Activated T-helper 1 cell treated with anti-CD3 and anti-CD28 coated beads, Interleukin-12 subunit alpha, Interleukin-12 subunit beta, Interleukin-2, Interleukin-4 antibody, amounts not matched to agents 30 ng/mL and 10 ng/mL and 1 ng/mL, durations not matched to agents 14 hours and 24 hours and 36 hours (primary cell): ENCODE measurements at regions of chr4 and their contacts with region 1.

Region 1: GRCh38 chr4:165207431-165208220 is at the start of gene KLHL2:
- DNase-seq: peak; percentile 72
- H3K4me3 Mint-ChIP-seq: peak within 1 kb of the TSS; percentile 94
- H3K27ac Mint-ChIP-seq: peak within 1 kb of the TSS; percentile 88
- H3K4me1 Mint-ChIP-seq: peaks cover 74% of the 10 kb centered on the region
- H3K27me3 Mint-ChIP-seq: no peaks in the 10 kb centered on the region
- total RNA-seq, gene KLHL2: 38.6 and 40.6 TPM in 2 replicates

Region 2: DNA sequence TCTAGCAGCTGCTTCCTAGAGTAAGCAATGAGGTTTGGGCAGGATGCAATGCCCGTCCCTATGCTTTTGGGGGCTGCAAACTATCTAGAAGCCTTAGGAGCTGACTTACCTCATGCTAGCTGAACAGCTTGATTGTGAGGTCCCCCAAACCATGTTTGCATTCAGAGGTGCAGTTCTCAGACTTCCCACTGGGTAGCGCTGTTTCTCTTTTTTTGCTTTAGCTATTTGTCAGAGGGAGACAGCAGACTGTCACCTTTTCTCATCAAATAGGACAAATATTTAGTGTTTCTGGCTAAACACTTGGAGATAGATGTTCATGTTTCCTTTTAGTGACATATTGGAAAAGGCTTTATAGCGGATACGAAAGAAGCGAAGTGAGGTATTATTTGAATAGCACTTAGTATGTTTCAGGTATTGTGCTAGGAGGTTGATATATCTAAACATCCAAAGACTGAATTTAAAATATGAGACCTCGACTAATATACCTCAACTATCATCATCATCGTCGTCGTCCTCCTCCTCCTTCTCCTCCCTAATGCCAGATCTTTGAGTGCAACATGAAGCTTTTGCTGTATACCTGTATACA is 76.3 kb before region 1 on chr4:
- intact Hi-C with region 1: loop called (anchors 1 kb)
- DNase-seq: peak; percentile 65
- H3K4me3 Mint-ChIP-seq: no peak overlapping the region
- H3K27ac Mint-ChIP-seq: no peak overlapping the region
- H3K4me1 Mint-ChIP-seq: peaks cover 18% of the 10 kb centered on the region
- H3K27me3 Mint-ChIP-seq: peaks cover 5% of the 10 kb centered on the region

Region 3: DNA sequence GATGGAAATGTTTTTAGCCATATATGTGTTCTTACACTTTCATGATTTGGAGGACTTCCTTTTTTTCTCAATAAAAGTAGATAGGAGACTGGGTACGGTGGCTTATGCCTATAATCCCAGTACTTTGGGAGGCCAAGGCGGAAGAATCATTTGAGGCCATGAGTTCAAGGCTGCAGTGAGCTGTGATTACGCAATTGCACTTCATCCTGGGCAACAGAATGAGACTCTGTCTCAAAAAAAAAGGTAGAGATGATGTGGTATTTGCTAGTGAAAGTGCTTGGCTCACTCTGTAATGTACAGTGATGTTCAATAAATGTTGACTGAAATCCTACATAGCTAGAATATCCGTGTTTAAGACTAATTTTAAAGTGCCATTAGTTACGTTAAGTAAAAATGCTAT is 27.1 kb after region 1 on chr4:
- intact Hi-C with region 1: loop called (anchors 2 kb)
- DNase-seq: no peak
- H3K4me3 Mint-ChIP-seq: no peak overlapping the region
- H3K27ac Mint-ChIP-seq: no peak overlapping the region
- H3K4me1 Mint-ChIP-seq: peaks cover 60% of the 10 kb centered on the region
- H3K27me3 Mint-ChIP-seq: no peaks in the 10 kb centered on the region

Region 4: DNA sequence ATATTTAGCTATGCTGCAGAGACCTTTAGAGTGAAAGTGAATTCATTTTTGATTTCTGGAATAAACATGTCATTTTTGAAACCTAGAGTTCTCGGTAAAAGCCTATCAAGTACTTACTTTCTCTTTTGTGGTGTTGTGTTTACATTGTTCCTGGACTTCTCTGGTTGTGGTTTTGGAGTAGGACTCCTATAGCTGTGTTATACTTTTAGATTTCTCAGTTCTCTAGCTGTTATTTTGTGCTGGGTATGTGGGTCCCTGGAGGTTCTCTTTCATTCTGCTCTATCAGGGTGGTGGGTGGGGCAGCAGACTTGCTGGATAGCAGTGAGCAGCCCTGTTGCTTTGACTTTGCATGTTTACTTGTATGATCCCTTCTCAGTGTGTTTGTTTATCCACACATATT is 94.2 kb after region 1 on chr4:
- intact Hi-C with region 1: loop called (anchors 1 kb)
- DNase-seq: no peak
- H3K4me3 Mint-ChIP-seq: peak overlapping the region; percentile 73
- H3K27ac Mint-ChIP-seq: peak overlapping the region; percentile 74
- H3K4me1 Mint-ChIP-seq: peaks cover 33% of the 10 kb centered on the region
- H3K27me3 Mint-ChIP-seq: no peaks in the 10 kb centered on the region